Activated T-helper 2 cell treated with anti-CD3 and anti-CD28 coated beads, Interferon-gamma antibody, Interleukin-2, Interleukin-4, amounts not matched to agents 10 μg/mL and 5 μg/mL and 100 μg/mL, durations not matched to agents 14 hours and 24 hours and 36 hours (primary cell): ENCODE measurements at regions of chr9 and their contacts with region 1.

Region 1: GRCh38 chr9:81382959-81383358 is 306.4 kb downstream of the TLE1 start:
- DNase-seq: no peak
- H3K4me3 Mint-ChIP-seq: no peak overlapping the region
- H3K27ac Mint-ChIP-seq: no peak overlapping the region
- H3K4me1 Mint-ChIP-seq: no peaks in the 10 kb centered on the region
- H3K27me3 Mint-ChIP-seq: no peaks in the 10 kb centered on the region

Region 2: GRCh38 chr9:81372628-81373191 is 10.2 kb before region 1 on chr9:
- intact Hi-C with region 1: loop called (anchors 1 kb)
- DNase-seq: no peak
- H3K4me3 Mint-ChIP-seq: no peak overlapping the region
- H3K27ac Mint-ChIP-seq: no peak overlapping the region
- H3K4me1 Mint-ChIP-seq: no peaks in the 10 kb centered on the region
- H3K27me3 Mint-ChIP-seq: no peaks in the 10 kb centered on the region